Transverse colon (tissue), 4 donors: ENCODE measurements at regions of chr14 and their contacts with region 1.

Region 1: DNA sequence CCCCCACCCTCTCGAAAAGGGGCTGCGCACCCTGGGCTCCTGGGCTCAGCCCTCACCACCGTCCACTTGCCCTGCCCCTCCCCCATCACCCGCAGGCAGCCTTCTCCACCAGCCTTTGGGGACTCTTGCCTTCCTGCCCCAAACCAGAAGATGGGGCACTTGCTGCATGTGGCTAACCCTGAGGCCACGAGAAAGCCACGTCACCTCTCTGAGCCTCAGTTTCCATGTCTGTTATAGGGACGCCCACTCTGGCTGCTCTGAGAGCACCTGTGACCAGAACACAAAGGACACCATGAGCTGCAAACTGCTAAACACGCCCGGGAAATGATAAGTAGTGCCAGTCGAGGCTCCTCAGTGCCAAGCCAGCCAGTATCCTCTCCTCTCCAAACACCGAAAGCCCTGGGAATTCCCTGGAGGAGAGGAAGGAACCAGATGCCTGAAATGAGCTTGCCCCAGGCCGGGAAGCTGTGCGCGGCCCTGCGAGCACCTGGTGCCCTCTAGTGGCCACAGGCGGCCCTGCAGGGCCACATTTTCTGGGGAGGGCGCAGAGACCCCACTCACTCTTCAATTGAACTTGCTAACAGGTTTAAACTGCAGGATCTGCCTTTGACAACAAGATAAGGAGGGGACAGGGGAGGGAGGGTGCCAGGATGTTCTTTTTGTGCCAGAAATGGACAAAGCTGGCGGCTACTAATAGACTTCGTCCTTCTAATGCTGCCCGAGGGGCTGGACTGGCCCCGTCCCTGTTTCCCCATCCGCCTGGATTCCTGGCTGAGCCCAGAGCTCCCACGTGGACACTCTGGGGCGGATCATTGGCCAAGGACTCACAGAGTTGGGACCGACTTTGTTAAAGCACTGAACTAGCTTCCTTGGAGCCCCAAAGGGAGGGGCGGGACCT is 10.2 kb upstream of the SERPINA9 start:
- DNase-seq: peak; percentile 41
- H3K4me3 ChIP-seq: no peak overlapping the region
- H3K27ac ChIP-seq: no peak overlapping the region
- H3K4me1 ChIP-seq: peaks cover 0 to 8% (median 3%) of the 10 kb centered on the region in 4 donors
- H3K27me3 ChIP-seq: peaks cover 14% of the 10 kb centered on the region
- CTCF ChIP-seq: peak; percentile 84 to 100 (median 99)
- EP300 ChIP-seq: no peak
- POLR2A ChIP-seq: no peak

Region 2: DNA sequence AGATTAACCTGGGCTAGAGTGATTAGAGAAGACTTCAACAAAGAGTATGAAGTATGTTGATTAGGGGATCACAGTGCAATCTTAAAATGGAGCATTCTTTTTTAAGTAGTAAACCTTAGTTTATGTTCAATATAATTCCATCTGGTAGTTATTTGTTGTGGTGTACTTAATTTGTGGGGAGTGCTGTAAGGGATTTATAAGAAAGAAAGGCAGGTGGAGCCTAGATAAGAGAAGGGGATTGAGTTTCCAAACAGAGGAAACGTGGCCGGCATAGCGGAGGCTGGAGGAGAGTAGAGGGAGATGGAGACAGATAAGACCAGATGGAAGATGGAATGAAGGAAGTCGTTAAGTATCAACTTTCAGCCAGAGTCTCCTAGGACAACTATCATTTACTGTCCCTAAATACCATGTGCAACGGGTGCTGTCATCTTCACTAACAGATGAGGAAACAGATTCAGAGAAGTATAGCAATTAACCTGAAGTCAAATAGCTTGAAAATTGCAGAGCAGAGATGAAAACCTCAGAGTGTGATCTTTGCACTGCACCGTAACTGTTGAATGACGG is 1654.0 kb before region 1 on chr14:
- in situ Hi-C with region 1: no loop called
- intact Hi-C with region 1: loop called (anchors 10 kb)
- DNase-seq: no peak
- H3K4me3 ChIP-seq: no peak overlapping the region
- H3K27ac ChIP-seq: no peak overlapping the region
- H3K4me1 ChIP-seq: no peaks in the 10 kb centered on the region
- H3K27me3 ChIP-seq: no peaks in the 10 kb centered on the region
- CTCF ChIP-seq: no peak
- EP300 ChIP-seq: no peak
- POLR2A ChIP-seq: no peak

Region 3: GRCh38 chr14:94355191-94355797 is 130.9 kb before region 1 on chr14:
- in situ Hi-C with region 1: loop called in 1 of 4 experiments (anchors 10 kb)
- intact Hi-C with region 1: no loop called
- DNase-seq: peak; percentile 30
- H3K4me3 ChIP-seq: no peak overlapping the region
- H3K27ac ChIP-seq: no peak overlapping the region
- H3K4me1 ChIP-seq: no peaks in the 10 kb centered on the region
- H3K27me3 ChIP-seq: peaks cover 4% of the 10 kb centered on the region
- CTCF ChIP-seq: peak; percentile 5 to 46 (median 27)
- EP300 ChIP-seq: no peak
- POLR2A ChIP-seq: no peak

Region 4: GRCh38 chr14:94412671-94413638 is 73.2 kb before region 1 on chr14:
- in situ Hi-C with region 1: no loop called
- intact Hi-C with region 1: no loop called
- DNase-seq: no peak
- H3K4me3 ChIP-seq: no peak overlapping the region
- H3K27ac ChIP-seq: no peak overlapping the region
- H3K4me1 ChIP-seq: peaks cover 0 to 16% (median 0%) of the 10 kb centered on the region in 4 donors
- H3K27me3 ChIP-seq: no peaks in the 10 kb centered on the region
- CTCF ChIP-seq: peak in 3 of 5 experiments; percentile 20 to 27 (median 21)
- EP300 ChIP-seq: no peak
- POLR2A ChIP-seq: no peak